ENCODE measurements at regions of chr12 and their contacts with region 1.

Region 1: GRCh38 chr12:442235-442884 is 17.4 kb upstream of the B4GALNT3 start:
- DNase-seq: peak; percentile 69
- ATAC-seq: peak; percentile 72
- H3K4me3 Mint-ChIP-seq: no peak overlapping the region
- H3K27ac Mint-ChIP-seq: no peak overlapping the region
- H3K4me1 Mint-ChIP-seq: no peaks in the 10 kb centered on the region
- H3K27me3 Mint-ChIP-seq: no peaks in the 10 kb centered on the region
- CTCF ChIP-seq: peak; percentile 48

Region 2: GRCh38 chr12:389139-390096 is 52.9 kb before region 1 on chr12 and contains the start of gene KDM5A:
- CTCF ChIA-PET with region 1: no interaction called
- POLR2A ChIA-PET with region 1: no interaction called
- DNase-seq: peak; percentile 83
- ATAC-seq: peak; percentile 96
- H3K4me3 Mint-ChIP-seq: peak within 1 kb of the TSS; percentile 99
- H3K27ac Mint-ChIP-seq: peak within 1 kb of the TSS; percentile 100
- H3K4me1 Mint-ChIP-seq: peaks cover 20% of the 10 kb centered on the region
- H3K27me3 Mint-ChIP-seq: no peaks in the 10 kb centered on the region; the same call in 1 of the 2 replicates
- CTCF ChIP-seq: no peak
- total RNA-seq, gene KDM5A: 49.2 to 57.6 TPM (median 52.0 TPM) in 3 replicates

Region 3: GRCh38 chr12:401235-402028 is 40.9 kb before region 1 on chr12 and contains the start of gene CCDC77:
- CTCF ChIA-PET with region 1: interaction called, 12 read pairs
- POLR2A ChIA-PET with region 1: no interaction called
- DNase-seq: peak; percentile 93
- ATAC-seq: peak; percentile 99
- H3K4me3 Mint-ChIP-seq: no peak within 1 kb of the TSS
- H3K27ac Mint-ChIP-seq: no peak within 1 kb of the TSS
- H3K4me1 Mint-ChIP-seq: no peaks in the 10 kb centered on the region
- H3K27me3 Mint-ChIP-seq: no peaks in the 10 kb centered on the region
- CTCF ChIP-seq: no peak
- total RNA-seq, gene CCDC77: 24.2 to 29.7 TPM (median 28.9 TPM) in 3 replicates

Region 4: DNA sequence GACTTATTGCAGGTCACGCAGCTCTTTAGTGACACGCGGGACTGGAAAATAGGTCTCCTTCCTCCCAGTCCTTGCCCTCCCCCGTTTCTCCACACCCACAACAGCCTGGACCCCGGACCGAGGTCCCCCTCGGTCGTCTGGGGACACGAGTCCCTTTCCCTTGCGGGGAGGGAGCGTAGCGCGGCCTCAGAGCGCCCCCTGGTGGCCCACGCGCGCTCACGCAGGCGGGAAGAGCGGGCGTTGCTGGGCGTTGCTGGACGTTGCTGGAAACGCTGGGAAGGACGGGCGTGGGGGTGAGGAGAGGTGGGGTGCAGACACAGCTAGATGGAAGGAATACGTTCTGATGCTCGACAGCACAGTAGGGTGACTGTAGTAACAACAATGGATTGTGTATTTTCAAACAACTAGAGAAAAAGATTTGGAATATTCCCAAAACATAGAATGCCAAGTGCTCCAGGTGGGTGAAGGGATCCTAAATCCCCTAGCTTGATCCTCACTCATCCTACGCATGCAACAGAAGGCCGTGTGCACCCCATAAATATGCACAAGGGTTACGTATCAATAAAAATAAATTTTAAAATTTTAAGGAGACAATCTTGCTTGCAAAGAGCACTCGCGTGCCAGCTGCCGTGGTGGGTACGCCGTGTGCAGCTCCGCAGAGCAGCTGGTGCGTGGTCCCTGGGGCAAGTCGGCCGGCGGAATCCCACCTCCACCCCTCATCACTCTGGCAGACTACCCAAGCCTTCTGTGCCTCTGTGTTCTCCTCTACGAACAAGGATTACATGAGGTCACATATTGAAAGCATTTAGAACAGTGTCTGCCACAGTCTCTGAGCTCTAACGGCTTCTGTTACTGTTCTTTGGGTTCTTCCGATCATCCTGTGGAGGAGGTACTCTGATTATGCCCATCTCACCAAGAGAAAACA is 104.8 kb after region 1 on chr12:
- CTCF ChIA-PET with region 1: interaction called, 24 read pairs
- POLR2A ChIA-PET with region 1: no interaction called
- DNase-seq: peak; percentile 81
- ATAC-seq: peak; percentile 80
- H3K4me3 Mint-ChIP-seq: peak overlapping the region; percentile 61
- H3K27ac Mint-ChIP-seq: no peak overlapping the region
- H3K4me1 Mint-ChIP-seq: peaks cover 4% of the 10 kb centered on the region
- H3K27me3 Mint-ChIP-seq: no peaks in the 10 kb centered on the region
- CTCF ChIP-seq: peak; percentile 99